Naive thymus-derived CD4-positive, alpha-beta T cell (primary cell): ENCODE measurements at regions of chr19 and their contacts with region 1.

Region 1: DNA sequence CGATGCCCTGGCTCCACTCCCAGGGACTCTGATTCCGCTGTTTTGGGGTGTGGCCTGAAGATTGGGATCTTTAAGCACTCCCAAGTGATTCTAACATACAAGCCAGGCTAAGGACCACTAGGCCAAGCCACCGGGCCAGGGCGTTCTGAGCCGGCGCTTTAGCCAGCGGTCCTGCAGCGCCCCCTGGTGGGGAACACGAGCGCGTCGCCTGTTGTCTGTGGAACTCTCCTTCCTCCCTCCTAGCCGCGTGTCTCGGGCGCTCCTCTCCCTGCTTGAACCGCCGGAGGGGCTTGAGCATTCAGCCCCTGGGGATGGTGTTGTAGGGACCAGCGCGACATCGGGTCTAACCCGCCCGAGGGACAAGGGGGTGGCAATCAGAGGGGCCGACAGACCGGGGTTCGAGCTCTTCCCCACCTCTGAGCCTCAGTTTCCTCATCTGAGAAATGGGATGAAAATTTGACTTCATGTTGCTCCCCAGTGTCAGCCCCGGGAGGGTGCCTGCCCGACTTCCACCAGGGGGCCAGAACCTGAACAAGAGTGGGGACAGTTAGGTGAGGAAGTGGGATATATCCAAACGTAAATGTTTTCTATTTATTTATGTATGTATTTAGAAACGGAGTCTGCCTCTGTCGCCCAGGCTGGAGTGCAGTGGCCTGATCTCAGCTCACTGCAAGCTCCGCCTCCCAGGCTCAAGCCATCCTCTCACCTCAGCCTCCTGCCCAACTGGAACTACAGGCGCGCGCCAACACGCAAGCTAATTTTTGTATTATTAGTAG is 18.0 kb upstream of the PNMA8B start:
- DNase-seq: peak in 8 of 9 donors; percentile 59 to 86 (median 72)
- ATAC-seq: peak; percentile 89
- H3K4me3 ChIP-seq: no peak overlapping the region
- H3K4me3 Mint-ChIP-seq: no peak overlapping the region
- H3K27ac ChIP-seq: no peak overlapping the region
- H3K27ac Mint-ChIP-seq: peak overlapping the region in 2 of 9 donors; percentile 32 to 64
- H3K4me1 ChIP-seq: peaks cover 5 to 22% of the 10 kb centered on the region in 2 donors
- H3K4me1 Mint-ChIP-seq: peaks cover 8 to 33% (median 29%) of the 10 kb centered on the region in 7 donors
- H3K27me3 ChIP-seq: no peaks in the 10 kb centered on the region
- H3K27me3 Mint-ChIP-seq: peaks cover 0 to 30% (median 13%) of the 10 kb centered on the region in 5 donors

Region 2: GRCh38 chr19:46308510-46308909 is 205.1 kb before region 1 on chr19:
- CTCF ChIA-PET with region 1: no interaction called
- POLR2A ChIA-PET with region 1: no interaction called
- intact Hi-C with region 1: no loop called
- DNase-seq: no peak
- ATAC-seq: no peak
- H3K4me3 ChIP-seq: no peak overlapping the region
- H3K4me3 Mint-ChIP-seq: no peak overlapping the region
- H3K27ac ChIP-seq: no peak overlapping the region
- H3K27ac Mint-ChIP-seq: no peak overlapping the region
- H3K4me1 ChIP-seq: no peaks in the 10 kb centered on the region
- H3K4me1 Mint-ChIP-seq: peaks cover 0 to 4% (median 0%) of the 10 kb centered on the region in 7 donors
- H3K27me3 ChIP-seq: no peaks in the 10 kb centered on the region
- H3K27me3 Mint-ChIP-seq: no peaks in the 10 kb centered on the region

Region 3: GRCh38 chr19:46392243-46392801 is 121.3 kb before region 1 on chr19:
- CTCF ChIA-PET with region 1: interaction called, 7 read pairs
- POLR2A ChIA-PET with region 1: interaction called, 4 read pairs
- intact Hi-C with region 1: loop called (anchors 1 to 2 kb)
- DNase-seq: no peak
- ATAC-seq: no peak
- H3K4me3 ChIP-seq: no peak overlapping the region
- H3K4me3 Mint-ChIP-seq: no peak overlapping the region
- H3K27ac ChIP-seq: peak overlapping the region; percentile 19
- H3K27ac Mint-ChIP-seq: peak overlapping the region in 3 of 9 donors; percentile 2 to 51 (median 40)
- H3K4me1 ChIP-seq: no peaks in the 10 kb centered on the region
- H3K4me1 Mint-ChIP-seq: peaks cover 0 to 18% (median 6%) of the 10 kb centered on the region in 7 donors
- H3K27me3 ChIP-seq: no peaks in the 10 kb centered on the region
- H3K27me3 Mint-ChIP-seq: no peaks in the 10 kb centered on the region

Region 4: DNA sequence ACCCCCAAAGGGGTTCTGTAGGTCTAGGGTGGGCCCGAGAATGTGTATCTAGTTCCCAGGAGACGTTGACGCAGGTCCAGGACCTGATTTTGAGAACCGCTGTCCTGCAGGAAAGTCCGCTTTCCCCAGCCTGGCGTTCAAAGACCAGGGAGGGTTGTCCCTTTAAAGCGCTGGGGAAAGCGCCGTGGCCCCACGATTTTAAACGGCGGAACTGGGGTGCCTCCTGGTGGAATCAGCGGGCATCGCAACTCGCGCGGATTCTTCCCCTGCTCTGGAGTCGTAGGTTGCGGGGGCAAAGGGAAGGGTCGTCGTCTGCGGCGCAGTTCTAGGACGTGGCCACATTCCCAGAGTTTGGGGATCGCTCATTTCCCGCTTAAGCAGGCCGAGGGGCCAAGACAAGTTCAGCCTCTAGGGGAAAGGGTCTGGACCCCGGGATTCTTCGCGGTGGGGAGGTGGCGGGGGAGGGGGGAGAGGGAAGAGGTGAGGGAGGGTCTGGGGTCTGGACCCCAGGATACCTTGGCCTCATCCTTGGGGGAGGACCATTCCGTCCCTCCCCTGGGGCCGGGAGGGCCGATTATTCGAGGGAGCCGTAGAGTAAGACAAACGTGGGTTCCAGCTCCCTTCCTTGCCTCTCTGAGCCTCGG is 25.7 kb before region 1 on chr19:
- CTCF ChIA-PET with region 1: interaction called, 25 read pairs
- POLR2A ChIA-PET with region 1: interaction called, 3 read pairs
- intact Hi-C with region 1: loop called (anchors 1 to 2 kb)
- DNase-seq: peak; percentile 43 to 80 (median 65)
- ATAC-seq: peak; percentile 79
- H3K4me3 ChIP-seq: no peak overlapping the region
- H3K4me3 Mint-ChIP-seq: peak overlapping the region in 6 of 10 donors; percentile 20 to 67 (median 35)
- H3K27ac ChIP-seq: no peak overlapping the region
- H3K27ac Mint-ChIP-seq: peak overlapping the region in 1 of 9 donors; percentile 13
- H3K4me1 ChIP-seq: peaks cover 3 to 21% of the 10 kb centered on the region in 2 donors
- H3K4me1 Mint-ChIP-seq: peaks cover 12 to 50% (median 34%) of the 10 kb centered on the region in 7 donors
- H3K27me3 ChIP-seq: peaks cover 5 to 34% of the 10 kb centered on the region in 2 donors
- H3K27me3 Mint-ChIP-seq: peaks cover 60 to 88% (median 71%) of the 10 kb centered on the region in 5 donors

Region 5: DNA sequence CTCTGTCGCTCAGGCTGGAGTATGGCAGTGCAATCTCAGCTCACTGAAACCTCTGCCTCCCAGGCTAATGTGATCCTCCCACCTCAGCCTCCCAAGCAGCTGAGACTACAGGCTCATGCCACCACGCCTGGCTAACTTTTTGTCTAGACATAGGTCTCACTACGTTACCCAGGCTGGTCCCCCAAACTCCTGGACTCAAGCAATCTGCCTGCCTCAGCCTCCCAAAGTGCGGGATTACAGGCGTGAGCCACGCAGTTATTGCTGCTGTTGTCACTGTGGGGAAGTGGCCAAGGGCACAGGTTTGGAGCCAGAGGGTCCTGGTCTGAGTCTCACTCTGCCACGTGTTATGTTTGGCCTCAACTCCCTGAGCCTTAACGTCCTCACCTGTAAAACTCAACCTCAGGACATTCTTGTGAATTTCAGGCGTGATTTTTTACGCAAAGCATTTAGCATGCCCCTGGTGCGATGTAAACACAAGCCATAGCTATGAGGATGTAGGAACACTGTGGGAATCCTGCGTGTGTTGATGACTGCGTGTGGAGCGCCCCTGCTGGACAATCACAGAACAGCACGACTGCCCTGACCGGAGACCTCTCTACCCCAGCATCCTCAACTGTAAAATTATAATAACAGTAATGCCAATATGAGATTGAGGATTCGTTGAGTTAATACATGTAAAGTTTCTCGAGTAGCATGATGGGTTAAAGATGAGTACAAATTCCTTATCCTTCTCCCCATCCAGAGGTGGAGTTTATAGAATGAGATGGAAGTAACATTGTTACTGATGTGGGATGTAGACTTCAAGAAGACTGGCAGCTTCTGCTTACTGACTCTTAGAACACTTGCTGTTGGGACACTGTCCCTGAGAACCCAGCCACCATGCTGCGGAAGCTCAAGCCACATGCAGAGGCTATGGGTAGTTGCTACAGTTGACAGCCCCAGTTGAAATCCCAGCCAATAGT is 23.8 kb after region 1 on chr19:
- CTCF ChIA-PET with region 1: interaction called, 241 read pairs
- POLR2A ChIA-PET with region 1: interaction called, 4 read pairs
- intact Hi-C with region 1: loop called (anchors 1 kb)
- DNase-seq: peak; percentile 27 to 64 (median 48)
- ATAC-seq: peak; percentile 82
- H3K4me3 ChIP-seq: no peak overlapping the region
- H3K4me3 Mint-ChIP-seq: no peak overlapping the region
- H3K27ac ChIP-seq: no peak overlapping the region
- H3K27ac Mint-ChIP-seq: no peak overlapping the region
- H3K4me1 ChIP-seq: no peaks in the 10 kb centered on the region
- H3K4me1 Mint-ChIP-seq: peaks cover 0 to 8% (median 6%) of the 10 kb centered on the region in 7 donors
- H3K27me3 ChIP-seq: no peaks in the 10 kb centered on the region
- H3K27me3 Mint-ChIP-seq: peaks cover 0 to 14% (median 0%) of the 10 kb centered on the region in 5 donors

Region 6: GRCh38 chr19:46755077-46755852 is 241.6 kb after region 1 on chr19:
- CTCF ChIA-PET with region 1: no interaction called
- POLR2A ChIA-PET with region 1: no interaction called
- intact Hi-C with region 1: no loop called
- DNase-seq: no peak
- ATAC-seq: no peak
- H3K4me3 ChIP-seq: no peak overlapping the region
- H3K4me3 Mint-ChIP-seq: no peak overlapping the region
- H3K27ac ChIP-seq: no peak overlapping the region
- H3K27ac Mint-ChIP-seq: peak overlapping the region in 1 of 9 donors; percentile 14
- H3K4me1 ChIP-seq: no peaks in the 10 kb centered on the region
- H3K4me1 Mint-ChIP-seq: peaks cover 4 to 20% (median 10%) of the 10 kb centered on the region in 7 donors
- H3K27me3 ChIP-seq: no peaks in the 10 kb centered on the region
- H3K27me3 Mint-ChIP-seq: no peaks in the 10 kb centered on the region